ENCODE measurements at regions of chr2 and their contacts with region 1.

Region 1: GRCh38 chr2:112275306-112275886 is at the start of gene ZC3H6:
- DNase-seq: peak; percentile 98 to 99
- ATAC-seq: peak; percentile 93 to 94
- H3K4me3 ChIP-seq: peak within 1 kb of the TSS; percentile 88 to 97 (median 94)
- H3K27ac ChIP-seq: peak within 1 kb of the TSS; percentile 99 to 100 (median 100)
- H3K4me1 ChIP-seq: peaks cover 22 to 26% of the 10 kb centered on the region in 2 donors
- H3K27me3 ChIP-seq: no peaks in the 10 kb centered on the region
- CTCF ChIP-seq: peak in 4 of 5 experiments; percentile 32 to 49 (median 43)
- POLR2A ChIP-seq: peak; percentile 86 to 91
- total RNA-seq, gene ZC3H6: 6.3 to 15.1 (median 9.9) TPM

Region 2: DNA sequence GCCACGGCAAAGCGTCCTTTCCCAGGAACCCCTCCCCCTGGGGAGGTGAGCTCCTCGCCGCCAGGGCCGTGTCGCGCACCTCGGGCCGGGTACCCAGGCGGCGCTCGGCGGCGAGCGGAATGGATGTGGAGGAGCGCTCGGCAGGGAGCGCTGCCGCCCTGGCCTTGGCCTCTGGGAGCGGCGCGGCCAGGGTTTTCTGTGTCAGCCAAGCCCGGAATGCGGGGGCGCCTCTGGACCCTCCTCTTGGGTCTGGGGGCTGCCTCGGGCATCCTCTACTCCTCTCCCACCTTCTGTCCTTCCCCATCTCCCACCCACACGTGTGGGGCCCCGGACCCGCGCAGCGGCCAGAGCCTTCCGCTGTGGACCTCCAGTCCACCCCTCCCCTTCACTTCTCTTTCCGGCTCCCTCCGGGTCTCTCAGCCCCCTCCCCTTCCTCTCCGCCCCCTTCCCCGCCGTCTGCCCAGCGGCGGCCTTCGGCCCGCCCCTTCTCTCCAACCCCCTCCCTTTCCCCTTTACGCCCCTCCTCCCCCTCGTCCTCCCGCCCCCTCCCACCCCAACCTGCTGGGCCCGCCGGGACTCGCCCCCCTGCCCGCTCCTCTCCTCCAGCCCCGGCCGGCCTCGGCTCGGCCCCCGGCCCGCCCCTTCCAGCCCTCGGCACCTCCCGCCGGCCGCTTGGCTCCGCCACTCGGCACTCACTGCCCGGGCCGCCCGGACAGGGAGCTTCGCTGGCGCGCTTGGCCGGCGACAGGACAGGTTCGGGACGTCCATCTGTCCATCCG is 377.3 kb before region 1 on chr2 and contains the start of gene MERTK:
- in situ Hi-C with region 1: loop called in 1 of 4 experiments (anchors 25 kb)
- intact Hi-C with region 1: loop called (anchors 10 kb)
- DNase-seq: peak; percentile 45 to 48
- ATAC-seq: peak; percentile 63 to 80
- H3K4me3 ChIP-seq: peak within 1 kb of the TSS; percentile 68 to 77 (median 72)
- H3K27ac ChIP-seq: peak within 1 kb of the TSS; percentile 61 to 81 (median 72)
- H3K4me1 ChIP-seq: peaks cover 0 to 9% of the 10 kb centered on the region in 2 donors
- H3K27me3 ChIP-seq: peaks cover 10 to 28% (median 12%) of the 10 kb centered on the region in 3 donors
- CTCF ChIP-seq: peak; percentile 32 to 69 (median 57)
- POLR2A ChIP-seq: peak; percentile 36 to 50
- total RNA-seq, gene MERTK: 2.4 to 5.7 (median 3.7) TPM

Measured in gastrocnemius medialis (tissue), 4 donors.